GM23248 (cell line): ENCODE measurements at regions of chr9 and their contacts with region 1.

Region 1: GRCh38 chr9:115204904-115205453 is 87.0 kb upstream of the TNC start:
- DNase-seq: peak; percentile 89
- H3K4me3 ChIP-seq: no peak overlapping the region
- H3K27ac ChIP-seq: peak overlapping the region; percentile 60
- H3K4me1 ChIP-seq: peaks cover 92% of the 10 kb centered on the region
- H3K27me3 ChIP-seq: no peaks in the 10 kb centered on the region

Region 2: GRCh38 chr9:115524453-115525059 is 319.6 kb after region 1 on chr9:
- in situ Hi-C with region 1: loop called (anchors 10 kb)
- DNase-seq: peak; percentile 73
- H3K4me3 ChIP-seq: no peak overlapping the region
- H3K27ac ChIP-seq: no peak overlapping the region
- H3K4me1 ChIP-seq: peaks cover 20% of the 10 kb centered on the region
- H3K27me3 ChIP-seq: no peaks in the 10 kb centered on the region